Astrocyte of the cerebellum (primary cell): ENCODE measurements at regions of chr17 and their contacts with region 1.

Region 1: GRCh38 chr17:17051791-17052461 is 9.7 kb downstream of the MPRIP start:
- DNase-seq: no peak
- H3K4me3 ChIP-seq: no peak overlapping the region
- CTCF ChIP-seq: no peak

Region 2: GRCh38 chr17:17016199-17016866 is 35.6 kb before region 1 on chr17:
- in situ Hi-C with region 1: no loop called
- DNase-seq: no peak
- H3K4me3 ChIP-seq: no peak overlapping the region
- CTCF ChIP-seq: no peak

Region 3: DNA sequence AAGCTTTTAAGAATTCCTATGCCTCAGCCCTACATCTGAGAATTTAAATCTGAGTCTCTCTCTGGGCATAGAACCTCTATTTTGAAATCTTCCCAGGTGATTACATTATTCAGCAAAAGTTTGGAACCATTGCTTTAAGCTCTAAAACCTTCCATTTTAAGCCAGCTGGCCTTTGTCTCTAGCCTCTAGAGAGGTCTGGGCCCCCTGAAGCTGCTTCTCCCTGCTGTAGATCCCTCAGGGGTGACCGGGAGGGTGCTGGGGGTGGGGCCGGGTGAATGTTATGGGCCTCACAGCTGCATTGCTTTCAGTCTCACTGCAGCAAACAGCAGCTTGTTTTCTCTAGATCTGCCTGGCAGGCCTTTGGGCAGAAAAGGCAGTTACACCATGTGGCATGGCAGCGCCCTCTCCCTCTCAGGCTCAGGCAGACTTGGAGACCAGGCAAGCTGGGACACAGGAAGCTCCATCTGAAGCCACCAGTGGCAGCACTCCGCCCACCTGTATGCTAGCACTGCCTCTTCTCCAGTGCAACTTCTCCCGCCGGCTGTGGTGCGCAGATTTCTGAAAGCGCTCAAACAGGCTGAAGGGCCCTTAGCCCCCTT is 56.6 kb after region 1 on chr17:
- in situ Hi-C with region 1: no loop called
- DNase-seq: no peak
- H3K4me3 ChIP-seq: no peak overlapping the region
- CTCF ChIP-seq: no peak

Region 4: DNA sequence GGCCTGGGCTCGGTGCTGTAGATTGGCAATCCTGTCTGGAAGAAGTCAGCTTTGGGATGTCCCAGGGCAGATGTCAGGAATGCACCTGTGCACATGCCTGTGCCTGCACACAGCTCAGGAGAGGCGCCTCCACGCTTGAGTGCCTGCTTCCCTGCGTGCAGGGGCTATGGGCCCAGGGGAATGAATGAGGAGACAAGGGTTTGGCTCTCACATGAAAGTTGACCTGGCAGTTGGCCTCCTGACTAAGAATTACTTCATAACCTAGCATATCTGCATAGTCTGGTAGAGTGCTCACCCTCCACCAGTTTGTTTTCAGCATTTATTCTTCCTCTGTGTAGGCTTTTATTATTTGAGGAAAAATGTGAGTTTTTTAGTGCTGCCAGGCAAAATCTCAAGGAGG is 104.2 kb after region 1 on chr17:
- in situ Hi-C with region 1: loop called (anchors 5 kb)
- DNase-seq: peak; percentile 71
- H3K4me3 ChIP-seq: no peak overlapping the region
- CTCF ChIP-seq: no peak

Region 5: GRCh38 chr17:17237026-17237799 is 185.3 kb after region 1 on chr17 and contains the start of gene FLCN:
- in situ Hi-C with region 1: no loop called
- DNase-seq: peak; percentile 66
- H3K4me3 ChIP-seq: peak within 1 kb of the TSS; percentile 99
- CTCF ChIP-seq: no peak